Naive thymus-derived CD4-positive, alpha-beta T cell (primary cell): ENCODE measurements at regions of chr11 and their contacts with region 1.

Region 1: GRCh38 chr11:12331239-12331874 is 46.0 kb upstream of the PARVA start:
- DNase-seq: peak; percentile 44 to 74 (median 67)
- ATAC-seq: peak; percentile 63
- H3K4me3 ChIP-seq: no peak overlapping the region
- H3K4me3 Mint-ChIP-seq: no peak overlapping the region
- H3K27ac ChIP-seq: no peak overlapping the region
- H3K27ac Mint-ChIP-seq: no peak overlapping the region
- H3K4me1 ChIP-seq: no peaks in the 10 kb centered on the region
- H3K4me1 Mint-ChIP-seq: peaks cover 0 to 12% (median 4%) of the 10 kb centered on the region in 7 donors
- H3K27me3 ChIP-seq: no peaks in the 10 kb centered on the region
- H3K27me3 Mint-ChIP-seq: peaks cover 0 to 4% (median 0%) of the 10 kb centered on the region in 5 donors

Region 2: GRCh38 chr11:12258451-12258850 is 72.9 kb before region 1 on chr11:
- CTCF ChIA-PET with region 1: no interaction called
- POLR2A ChIA-PET with region 1: no interaction called
- intact Hi-C with region 1: no loop called
- DNase-seq: no peak
- ATAC-seq: no peak
- H3K4me3 ChIP-seq: no peak overlapping the region
- H3K4me3 Mint-ChIP-seq: no peak overlapping the region
- H3K27ac ChIP-seq: no peak overlapping the region
- H3K27ac Mint-ChIP-seq: no peak overlapping the region
- H3K4me1 ChIP-seq: no peaks in the 10 kb centered on the region
- H3K4me1 Mint-ChIP-seq: no peaks in the 10 kb centered on the region
- H3K27me3 ChIP-seq: no peaks in the 10 kb centered on the region
- H3K27me3 Mint-ChIP-seq: no peaks in the 10 kb centered on the region

Region 3: DNA sequence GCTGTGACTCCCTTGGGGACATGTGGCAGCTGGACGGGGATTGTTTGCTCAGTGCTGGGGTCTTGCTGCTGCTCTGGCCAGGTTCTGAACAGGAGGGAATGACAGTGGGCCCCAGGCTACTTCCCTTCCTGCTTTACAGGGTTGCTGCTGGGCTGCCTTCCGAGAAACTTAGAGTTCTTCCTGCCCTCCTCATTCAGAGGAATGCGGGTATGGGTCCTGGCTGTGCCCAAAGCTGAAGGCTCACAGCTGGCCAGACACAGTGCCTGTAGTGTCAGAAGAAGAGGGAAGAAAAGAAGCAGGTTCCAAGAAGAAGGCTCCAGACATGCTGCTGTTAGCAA is 62.3 kb before region 1 on chr11:
- CTCF ChIA-PET with region 1: no interaction called
- POLR2A ChIA-PET with region 1: no interaction called
- intact Hi-C with region 1: no loop called
- DNase-seq: no peak
- ATAC-seq: no peak
- H3K4me3 ChIP-seq: no peak overlapping the region
- H3K4me3 Mint-ChIP-seq: no peak overlapping the region
- H3K27ac ChIP-seq: no peak overlapping the region
- H3K27ac Mint-ChIP-seq: no peak overlapping the region
- H3K4me1 ChIP-seq: no peaks in the 10 kb centered on the region
- H3K4me1 Mint-ChIP-seq: peaks cover 0 to 8% (median 0%) of the 10 kb centered on the region in 7 donors
- H3K27me3 ChIP-seq: no peaks in the 10 kb centered on the region
- H3K27me3 Mint-ChIP-seq: no peaks in the 10 kb centered on the region

Region 4: GRCh38 chr11:12288212-12288930 is 43.0 kb before region 1 on chr11:
- CTCF ChIA-PET with region 1: interaction called, 17 read pairs
- POLR2A ChIA-PET with region 1: no interaction called
- intact Hi-C with region 1: no loop called
- DNase-seq: peak in 6 of 9 donors; percentile 13 to 59 (median 30)
- ATAC-seq: peak; percentile 50
- H3K4me3 ChIP-seq: no peak overlapping the region
- H3K4me3 Mint-ChIP-seq: no peak overlapping the region
- H3K27ac ChIP-seq: no peak overlapping the region
- H3K27ac Mint-ChIP-seq: no peak overlapping the region
- H3K4me1 ChIP-seq: peaks cover 5 to 6% of the 10 kb centered on the region in 2 donors
- H3K4me1 Mint-ChIP-seq: peaks cover 5 to 19% (median 14%) of the 10 kb centered on the region in 7 donors
- H3K27me3 ChIP-seq: no peaks in the 10 kb centered on the region
- H3K27me3 Mint-ChIP-seq: no peaks in the 10 kb centered on the region

Region 5: DNA sequence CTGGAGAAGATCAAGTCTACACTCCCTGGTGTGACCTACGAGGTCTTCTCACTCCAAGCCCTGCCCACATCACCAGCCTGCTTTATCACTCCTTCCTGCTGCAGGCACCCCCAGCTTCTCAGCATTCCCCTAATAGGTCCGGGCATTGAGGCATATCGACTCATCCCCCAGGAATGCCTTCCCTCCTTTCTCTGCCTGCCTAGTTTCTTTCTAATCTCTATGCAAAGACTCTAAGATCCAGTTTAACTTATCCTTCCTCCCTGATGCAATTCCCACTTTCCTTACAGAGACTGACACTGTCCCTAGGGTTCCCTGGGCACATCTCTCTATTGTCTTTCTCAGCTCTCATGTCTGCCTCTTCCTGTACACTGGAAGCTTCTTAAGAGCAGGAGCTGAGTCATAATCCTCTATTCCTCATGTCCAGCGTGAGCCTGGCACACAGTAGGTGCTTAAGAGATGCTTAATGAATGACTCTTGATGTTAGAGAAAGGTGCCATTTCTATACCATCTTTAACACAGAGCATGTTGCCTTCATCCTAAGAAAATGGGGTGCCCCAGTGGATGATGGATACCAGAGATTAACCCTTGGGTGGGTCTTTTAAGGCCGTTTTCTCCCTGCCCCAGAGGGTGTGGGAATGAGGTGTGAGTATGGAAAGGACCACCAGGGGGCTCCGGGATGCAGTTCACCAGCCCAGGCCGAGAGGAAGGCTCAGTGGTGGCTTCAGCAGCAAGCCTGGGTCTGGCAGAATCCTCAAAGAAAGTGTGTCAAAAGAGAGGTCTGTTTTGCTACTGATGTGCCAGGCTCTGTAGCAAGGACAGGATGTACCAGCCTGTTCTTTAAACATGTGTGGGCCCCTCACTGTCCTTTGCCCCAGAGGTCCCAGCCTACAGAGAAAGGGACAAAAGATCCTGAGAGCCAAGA is 80.7 kb after region 1 on chr11:
- CTCF ChIA-PET with region 1: interaction called, 8 read pairs
- POLR2A ChIA-PET with region 1: no interaction called
- intact Hi-C with region 1: loop called (anchors 1 to 10 kb)
- DNase-seq: peak in 5 of 9 donors; percentile 8 to 27 (median 22)
- ATAC-seq: no peak
- H3K4me3 ChIP-seq: no peak overlapping the region
- H3K4me3 Mint-ChIP-seq: no peak overlapping the region
- H3K27ac ChIP-seq: no peak overlapping the region
- H3K27ac Mint-ChIP-seq: no peak overlapping the region
- H3K4me1 ChIP-seq: no peaks in the 10 kb centered on the region
- H3K4me1 Mint-ChIP-seq: no peaks in the 10 kb centered on the region
- H3K27me3 ChIP-seq: no peaks in the 10 kb centered on the region
- H3K27me3 Mint-ChIP-seq: peaks cover 0 to 19% (median 15%) of the 10 kb centered on the region in 5 donors

Region 6: GRCh38 chr11:12456651-12457579 is 125.6 kb after region 1 on chr11:
- CTCF ChIA-PET with region 1: no interaction called
- POLR2A ChIA-PET with region 1: no interaction called
- intact Hi-C with region 1: no loop called
- DNase-seq: no peak
- ATAC-seq: no peak
- H3K4me3 ChIP-seq: no peak overlapping the region
- H3K4me3 Mint-ChIP-seq: no peak overlapping the region
- H3K27ac ChIP-seq: no peak overlapping the region
- H3K27ac Mint-ChIP-seq: no peak overlapping the region
- H3K4me1 ChIP-seq: no peaks in the 10 kb centered on the region
- H3K4me1 Mint-ChIP-seq: no peaks in the 10 kb centered on the region
- H3K27me3 ChIP-seq: no peaks in the 10 kb centered on the region
- H3K27me3 Mint-ChIP-seq: peaks cover 0 to 5% (median 0%) of the 10 kb centered on the region in 5 donors

Region 7: GRCh38 chr11:12673924-12674570 is 342.7 kb after region 1 on chr11 and contains the start of gene TEAD1:
- CTCF ChIA-PET with region 1: no interaction called
- POLR2A ChIA-PET with region 1: no interaction called
- intact Hi-C with region 1: loop called in 1 of 2 experiments (anchors 10 kb)
- DNase-seq: peak; percentile 74 to 97 (median 81)
- ATAC-seq: peak; percentile 89
- H3K4me3 ChIP-seq: peak within 1 kb of the TSS; percentile 70
- H3K4me3 Mint-ChIP-seq: peak within 1 kb of the TSS; percentile 80 to 91 (median 85)
- H3K27ac ChIP-seq: no peak within 1 kb of the TSS
- H3K27ac Mint-ChIP-seq: peak within 1 kb of the TSS in 4 of 9 donors; percentile 29 to 77 (median 55)
- H3K4me1 ChIP-seq: peaks cover 5 to 6% of the 10 kb centered on the region in 2 donors
- H3K4me1 Mint-ChIP-seq: peaks cover 6 to 24% (median 9%) of the 10 kb centered on the region in 7 donors
- H3K27me3 ChIP-seq: peaks cover 5 to 50% of the 10 kb centered on the region in 2 donors
- H3K27me3 Mint-ChIP-seq: peaks cover 70 to 80% (median 75%) of the 10 kb centered on the region in 5 donors
- total RNA-seq, gene TEAD1: 0.07 to 0.22 TPM in 2 of 5 experiments, not detected in the others

Region 8: DNA sequence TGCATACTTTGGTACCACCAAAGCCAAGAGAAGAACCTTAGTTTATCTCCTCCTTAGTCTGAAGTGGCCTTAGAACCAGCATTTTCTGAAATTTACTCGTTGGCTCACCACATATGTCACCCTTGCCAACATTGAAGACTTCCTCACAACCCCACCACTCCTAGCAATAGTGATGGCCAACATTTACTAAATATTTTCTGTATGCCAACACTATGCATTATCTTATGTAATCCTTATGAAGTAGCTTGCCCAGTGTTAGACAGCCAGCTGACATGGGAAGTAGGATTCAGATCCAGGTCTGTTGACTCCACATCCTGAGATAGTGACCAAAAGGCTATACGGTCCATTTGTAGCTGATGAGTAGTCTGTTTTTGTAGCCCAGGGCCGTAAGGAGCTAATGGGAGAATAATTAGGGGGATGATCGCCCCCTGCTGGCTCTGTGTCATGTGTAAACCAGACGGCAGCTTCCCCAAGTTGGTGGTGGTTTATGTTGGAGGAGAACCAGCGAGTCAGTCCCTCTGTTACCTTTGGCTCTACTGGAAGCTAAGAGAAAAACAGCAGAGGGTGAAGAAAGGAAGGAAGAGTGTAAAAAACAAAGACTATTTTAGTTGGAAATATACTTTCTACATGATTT is 557.3 kb after region 1 on chr11:
- CTCF ChIA-PET with region 1: interaction called, 114 read pairs
- POLR2A ChIA-PET with region 1: interaction called, 3 read pairs
- intact Hi-C with region 1: loop called in 1 of 2 experiments (anchors 1 kb)
- DNase-seq: peak; percentile 28 to 60 (median 52)
- ATAC-seq: peak; percentile 63
- H3K4me3 ChIP-seq: no peak overlapping the region
- H3K4me3 Mint-ChIP-seq: no peak overlapping the region
- H3K27ac ChIP-seq: no peak overlapping the region
- H3K27ac Mint-ChIP-seq: no peak overlapping the region
- H3K4me1 ChIP-seq: no peaks in the 10 kb centered on the region
- H3K4me1 Mint-ChIP-seq: peaks cover 0 to 4% (median 0%) of the 10 kb centered on the region in 7 donors
- H3K27me3 ChIP-seq: no peaks in the 10 kb centered on the region
- H3K27me3 Mint-ChIP-seq: peaks cover 8 to 15% (median 13%) of the 10 kb centered on the region in 5 donors

Region 9: DNA sequence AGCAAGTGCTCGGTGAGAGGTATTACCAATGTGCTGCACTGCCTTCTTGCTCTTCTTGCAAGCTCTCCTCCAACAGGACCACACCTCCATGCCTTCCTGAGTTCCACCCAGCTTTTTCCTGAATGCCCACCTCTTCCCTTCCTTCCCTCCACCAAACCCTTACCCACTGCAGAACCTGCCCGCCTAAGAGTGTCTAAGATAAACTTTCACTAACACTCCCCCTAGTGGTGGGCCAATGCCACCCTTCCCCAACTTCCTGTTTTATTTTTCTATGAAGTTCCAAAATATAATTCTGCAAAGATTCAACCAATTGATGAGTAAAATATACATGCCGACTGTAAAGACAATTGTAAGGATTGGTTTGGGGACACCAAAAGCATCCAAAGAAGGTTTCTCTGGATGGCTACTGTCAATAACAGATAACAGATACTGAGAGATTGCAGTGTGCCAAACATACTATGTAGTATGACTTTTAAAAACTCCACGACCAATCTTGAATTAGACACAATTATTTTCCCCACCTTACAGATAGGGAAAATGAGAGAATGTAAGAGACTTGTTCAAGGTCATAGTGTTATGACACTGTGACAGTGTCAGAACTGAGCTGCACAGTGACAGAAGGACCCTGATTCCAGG is 907.6 kb after region 1 on chr11:
- CTCF ChIA-PET with region 1: no interaction called
- POLR2A ChIA-PET with region 1: no interaction called
- intact Hi-C with region 1: loop called in 1 of 2 experiments (anchors 1 kb)
- DNase-seq: peak; percentile 11 to 59 (median 43)
- ATAC-seq: peak; percentile 84
- H3K4me3 ChIP-seq: no peak overlapping the region
- H3K4me3 Mint-ChIP-seq: no peak overlapping the region
- H3K27ac ChIP-seq: no peak overlapping the region
- H3K27ac Mint-ChIP-seq: no peak overlapping the region
- H3K4me1 ChIP-seq: no peaks in the 10 kb centered on the region
- H3K4me1 Mint-ChIP-seq: peaks cover 0 to 5% (median 0%) of the 10 kb centered on the region in 7 donors
- H3K27me3 ChIP-seq: no peaks in the 10 kb centered on the region
- H3K27me3 Mint-ChIP-seq: peaks cover 0 to 45% (median 15%) of the 10 kb centered on the region in 5 donors